ENCODE measurements at regions of chr3 and their contacts with region 1.

Region 1: GRCh38 chr3:119240591-119241434 is at the start of gene B4GALT4:
- DNase-seq: peak; percentile 90 to 94
- H3K4me3 ChIP-seq: peak within 1 kb of the TSS; percentile 66
- H3K4me3 Mint-ChIP-seq: peak within 1 kb of the TSS; percentile 85
- H3K27ac Mint-ChIP-seq: peak within 1 kb of the TSS; percentile 91
- H3K4me1 ChIP-seq: peaks cover 17% of the 10 kb centered on the region
- H3K4me1 Mint-ChIP-seq: peaks cover 6% of the 10 kb centered on the region
- H3K27me3 ChIP-seq: no peaks in the 10 kb centered on the region
- H3K27me3 Mint-ChIP-seq: no peaks in the 10 kb centered on the region
- CTCF ChIP-seq: no peak
- total RNA-seq, gene B4GALT4: 56.9 and 59.7 TPM in 2 replicates

Region 2: DNA sequence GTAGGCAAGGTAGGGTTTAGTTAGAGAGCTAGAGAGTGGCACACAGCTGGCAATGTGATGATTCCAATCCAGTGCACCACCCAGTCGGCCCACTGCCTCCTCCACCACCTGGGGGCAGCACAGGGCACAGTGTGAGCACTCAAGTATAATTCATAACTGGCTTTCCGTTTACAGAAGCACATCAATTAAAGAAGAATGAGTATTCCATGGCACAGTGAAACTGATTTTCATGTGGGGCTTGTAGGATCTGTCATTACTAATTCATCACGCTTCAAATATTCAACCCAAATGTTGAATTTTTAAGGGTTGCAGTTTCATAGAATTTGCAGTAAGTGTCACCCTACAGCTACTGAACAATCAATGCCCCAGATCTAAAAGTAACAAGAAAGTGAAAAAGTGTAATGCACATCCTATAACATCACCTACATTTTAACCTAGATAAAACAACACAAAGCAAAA is 356.0 kb before region 1 on chr3:
- CTCF ChIA-PET with region 1: interaction called, 11 read pairs
- POLR2A ChIA-PET with region 1: no interaction called
- intact Hi-C with region 1: loop called (anchors 1 kb)
- DNase-seq: peak; percentile 57 to 73
- H3K4me3 ChIP-seq: no peak overlapping the region
- H3K4me3 Mint-ChIP-seq: no peak overlapping the region
- H3K27ac Mint-ChIP-seq: no peak overlapping the region
- H3K4me1 ChIP-seq: no peaks in the 10 kb centered on the region
- H3K4me1 Mint-ChIP-seq: no peaks in the 10 kb centered on the region
- H3K27me3 ChIP-seq: no peaks in the 10 kb centered on the region; the same call in 1 of the 2 replicates
- H3K27me3 Mint-ChIP-seq: peaks cover 22% of the 10 kb centered on the region
- CTCF ChIP-seq: peak; percentile 87 to 93

Region 3: GRCh38 chr3:119098619-119099222 is 142.1 kb before region 1 on chr3:
- CTCF ChIA-PET with region 1: interaction called, 4 read pairs
- POLR2A ChIA-PET with region 1: no interaction called
- intact Hi-C with region 1: loop called (anchors 1 kb)
- DNase-seq: peak in 1 of 2 experiments; percentile 49
- H3K4me3 ChIP-seq: no peak overlapping the region
- H3K4me3 Mint-ChIP-seq: no peak overlapping the region
- H3K27ac Mint-ChIP-seq: no peak overlapping the region
- H3K4me1 ChIP-seq: no peaks in the 10 kb centered on the region
- H3K4me1 Mint-ChIP-seq: no peaks in the 10 kb centered on the region
- H3K27me3 ChIP-seq: no peaks in the 10 kb centered on the region
- H3K27me3 Mint-ChIP-seq: peaks cover 5% of the 10 kb centered on the region
- CTCF ChIP-seq: peak; percentile 65 to 68

Region 4: DNA sequence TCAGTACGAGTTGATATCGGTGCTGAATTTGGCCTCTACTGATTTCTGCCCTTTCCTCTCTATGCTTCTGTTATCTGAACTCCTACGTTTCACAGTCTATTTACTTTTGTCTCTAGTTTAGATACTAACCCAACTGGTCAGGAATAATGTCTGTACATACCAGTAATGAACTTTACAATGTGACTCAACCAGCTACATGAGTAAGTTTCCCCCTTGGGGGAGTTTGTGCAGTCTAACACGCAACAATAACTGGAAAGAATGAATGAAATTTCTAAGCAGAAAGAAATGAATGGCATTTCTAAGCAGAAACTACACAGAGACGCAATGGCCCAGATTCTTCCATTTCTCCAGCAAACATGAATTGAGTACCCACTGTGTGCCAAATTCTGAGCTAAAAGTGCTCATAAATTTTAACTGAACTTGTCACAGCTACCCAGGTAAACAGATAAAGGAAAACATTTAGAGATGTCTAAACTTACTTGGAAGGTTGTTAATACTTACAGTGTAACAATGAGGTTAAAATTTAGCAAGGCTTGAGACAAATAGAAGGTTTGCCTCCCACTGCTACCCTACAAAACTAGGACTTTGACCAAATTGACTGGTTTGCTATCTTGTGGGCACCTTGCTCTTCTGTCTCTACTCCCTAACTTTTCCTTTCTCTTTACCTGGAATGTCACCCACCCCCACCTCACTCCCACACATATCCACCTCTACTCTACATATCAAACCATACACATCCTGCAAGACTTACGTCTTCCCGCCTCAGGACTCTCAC is 55.8 kb before region 1 on chr3:
- CTCF ChIA-PET with region 1: interaction called, 3 read pairs
- POLR2A ChIA-PET with region 1: interaction called, 4 read pairs
- intact Hi-C with region 1: loop called (anchors 1 kb)
- DNase-seq: peak; percentile 58 to 62
- H3K4me3 ChIP-seq: no peak overlapping the region
- H3K4me3 Mint-ChIP-seq: peak overlapping the region; percentile 14
- H3K27ac Mint-ChIP-seq: peak overlapping the region; percentile 49
- H3K4me1 ChIP-seq: peaks cover 65% of the 10 kb centered on the region
- H3K4me1 Mint-ChIP-seq: peaks cover 38% of the 10 kb centered on the region
- H3K27me3 ChIP-seq: no peaks in the 10 kb centered on the region
- H3K27me3 Mint-ChIP-seq: no peaks in the 10 kb centered on the region
- CTCF ChIP-seq: no peak

Region 5: DNA sequence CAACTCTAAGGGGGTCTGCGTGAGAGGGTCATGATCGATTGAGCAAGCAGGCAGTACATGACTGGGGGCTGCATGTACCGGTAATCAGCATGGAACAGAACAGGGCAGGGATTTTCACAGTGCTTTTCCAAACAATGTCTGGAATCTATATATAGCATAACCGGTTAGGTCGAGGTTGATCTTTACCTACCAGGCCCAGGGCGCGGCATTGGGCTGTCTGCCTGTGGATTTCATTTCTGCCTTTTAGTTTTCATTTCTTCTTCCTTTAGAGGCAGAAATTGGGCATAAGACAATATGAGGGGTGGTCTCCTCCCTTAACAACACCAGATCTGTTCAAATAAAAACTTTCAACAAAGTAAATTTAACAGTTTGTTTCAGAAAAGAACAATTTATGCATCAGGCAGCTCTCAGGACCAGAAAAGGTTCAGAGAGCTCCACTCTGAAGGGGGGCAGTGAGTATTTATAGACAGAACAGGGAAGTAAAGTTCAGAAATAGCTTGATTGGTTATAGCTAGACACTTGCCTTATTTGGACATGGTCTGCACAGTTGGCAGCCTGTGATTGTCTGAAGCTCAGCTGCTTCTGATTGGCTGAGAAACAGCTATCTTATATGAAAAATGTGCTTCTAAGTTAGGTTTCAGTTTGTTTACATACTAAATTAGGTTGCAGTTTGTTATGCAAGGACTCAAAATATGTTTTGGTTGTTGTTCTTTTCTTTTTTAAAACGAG is 17.0 kb after region 1 on chr3:
- CTCF ChIA-PET with region 1: interaction called, 13 read pairs
- POLR2A ChIA-PET with region 1: interaction called, 23 read pairs
- intact Hi-C with region 1: loop called (anchors 1 kb)
- DNase-seq: peak; percentile 57 to 68
- H3K4me3 ChIP-seq: peak overlapping the region; percentile 16; the same call in 1 of the 2 replicates
- H3K4me3 Mint-ChIP-seq: peak overlapping the region; percentile 76
- H3K27ac Mint-ChIP-seq: peak overlapping the region; percentile 97
- H3K4me1 ChIP-seq: peaks cover 24% of the 10 kb centered on the region
- H3K4me1 Mint-ChIP-seq: peaks cover 17% of the 10 kb centered on the region
- H3K27me3 ChIP-seq: no peaks in the 10 kb centered on the region
- H3K27me3 Mint-ChIP-seq: no peaks in the 10 kb centered on the region
- CTCF ChIP-seq: no peak

Measured in Caco-2 (cell line).